ENCODE measurements at regions of chr11 and their contacts with region 1.

Region 1: DNA sequence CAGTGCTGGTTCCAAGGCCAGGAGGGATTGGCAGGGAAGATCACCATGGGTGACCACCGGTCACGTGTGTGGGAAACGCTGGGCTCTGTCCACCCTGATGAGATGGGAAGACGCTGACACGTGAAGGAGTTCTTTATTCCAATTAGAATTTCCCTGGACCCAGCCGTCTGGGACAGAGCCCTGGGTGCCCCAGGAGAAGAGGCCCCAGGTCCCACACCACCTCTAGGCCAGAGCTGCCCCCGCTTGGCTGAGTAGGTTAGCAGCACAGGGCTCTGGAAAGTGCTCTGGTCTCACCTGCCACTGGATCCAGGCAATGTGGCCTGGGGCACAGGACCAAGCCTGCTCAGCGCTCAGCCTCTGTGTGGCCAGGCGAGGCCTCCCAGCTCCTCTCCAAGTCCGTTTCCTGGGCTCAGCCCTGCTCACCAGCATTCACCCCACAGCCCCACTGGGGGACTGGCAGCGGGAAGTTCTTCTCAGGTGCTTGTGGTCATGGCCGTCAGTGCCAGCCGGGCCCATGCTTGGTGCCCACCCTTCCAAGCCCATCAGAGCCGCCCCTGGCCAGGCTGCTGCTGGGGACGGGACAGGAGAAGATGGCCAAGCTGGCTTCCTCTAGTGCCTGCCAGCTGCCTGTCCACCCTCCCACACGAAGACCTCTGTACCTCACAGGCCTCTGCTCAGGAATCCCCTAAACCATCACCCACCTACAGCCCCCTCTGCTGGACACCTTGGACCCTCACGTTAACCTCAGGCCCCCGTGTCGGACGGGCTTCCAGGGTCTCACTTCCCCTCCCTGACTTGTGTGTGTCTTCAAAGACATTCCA is 62.4 kb upstream of the FGF3 start:
- DNase-seq: peak in 1 of 2 experiments; percentile 73
- H3K4me3 ChIP-seq: no peak overlapping the region
- H3K27ac ChIP-seq: no peak overlapping the region
- H3K4me1 ChIP-seq: peaks cover 0 to 8% (median 0%) of the 10 kb centered on the region in 4 experiments; a peak in 4 of 7 replicates
- H3K27me3 ChIP-seq: no peaks in the 10 kb centered on the region; a peak in 2 of 7 replicates
- CTCF ChIP-seq: peak; percentile 61 to 72 (median 69)
- EP300 ChIP-seq: no peak
- POLR2A ChIP-seq: no peak
- RAD21 ChIP-seq: peak; percentile 50 to 69

Region 2: GRCh38 chr11:69683764-69684333 is 197.8 kb before region 1 on chr11:
- CTCF ChIA-PET with region 1: interaction called, 28 read pairs
- POLR2A ChIA-PET with region 1: no interaction called
- DNase-seq: peak in 1 of 2 experiments; percentile 80
- H3K4me3 ChIP-seq: no peak overlapping the region
- H3K27ac ChIP-seq: no peak overlapping the region
- H3K4me1 ChIP-seq: no peaks in the 10 kb centered on the region; a peak in 1 of 7 replicates
- H3K27me3 ChIP-seq: peaks cover 0 to 6% (median 3%) of the 10 kb centered on the region in 4 experiments; a peak in 4 of 7 replicates
- CTCF ChIP-seq: peak; percentile 65 to 74 (median 67)
- EP300 ChIP-seq: no peak
- POLR2A ChIP-seq: no peak
- RAD21 ChIP-seq: peak; percentile 70 to 79

Region 3: DNA sequence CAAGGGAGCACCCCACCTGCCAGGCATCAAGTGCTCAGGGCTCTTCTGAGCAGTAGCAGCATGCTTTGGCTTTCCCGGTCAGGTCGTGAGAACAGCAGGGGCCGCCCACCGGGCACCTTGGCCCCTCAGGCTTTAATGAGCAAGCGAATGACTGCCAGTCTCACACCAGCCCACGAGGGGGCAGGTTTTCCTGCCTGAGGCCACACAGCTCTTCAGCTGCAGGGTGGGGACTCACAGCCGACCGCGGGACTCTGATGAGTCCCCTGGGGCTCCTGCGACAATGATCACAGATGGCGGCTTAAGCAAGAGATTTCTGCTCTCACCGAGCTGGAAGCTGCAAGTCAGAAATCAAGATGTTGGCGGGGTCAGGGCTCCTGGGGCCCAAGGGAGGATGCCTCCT is 163.5 kb before region 1 on chr11:
- CTCF ChIA-PET with region 1: interaction called, 56 read pairs
- POLR2A ChIA-PET with region 1: no interaction called
- DNase-seq: peak; percentile 77 to 84
- H3K4me3 ChIP-seq: peak overlapping the region in 1 of 4 experiments; percentile 14; a peak in 1 of 8 replicates
- H3K27ac ChIP-seq: no peak overlapping the region
- H3K4me1 ChIP-seq: peaks cover 0 to 10% (median 2%) of the 10 kb centered on the region in 4 experiments; a peak in 5 of 7 replicates
- H3K27me3 ChIP-seq: peaks cover 0 to 19% (median 13%) of the 10 kb centered on the region in 4 experiments; a peak in 5 of 7 replicates
- CTCF ChIP-seq: peak; percentile 87 to 92 (median 91)
- EP300 ChIP-seq: no peak
- POLR2A ChIP-seq: no peak
- RAD21 ChIP-seq: peak; percentile 85 to 92

Region 4: DNA sequence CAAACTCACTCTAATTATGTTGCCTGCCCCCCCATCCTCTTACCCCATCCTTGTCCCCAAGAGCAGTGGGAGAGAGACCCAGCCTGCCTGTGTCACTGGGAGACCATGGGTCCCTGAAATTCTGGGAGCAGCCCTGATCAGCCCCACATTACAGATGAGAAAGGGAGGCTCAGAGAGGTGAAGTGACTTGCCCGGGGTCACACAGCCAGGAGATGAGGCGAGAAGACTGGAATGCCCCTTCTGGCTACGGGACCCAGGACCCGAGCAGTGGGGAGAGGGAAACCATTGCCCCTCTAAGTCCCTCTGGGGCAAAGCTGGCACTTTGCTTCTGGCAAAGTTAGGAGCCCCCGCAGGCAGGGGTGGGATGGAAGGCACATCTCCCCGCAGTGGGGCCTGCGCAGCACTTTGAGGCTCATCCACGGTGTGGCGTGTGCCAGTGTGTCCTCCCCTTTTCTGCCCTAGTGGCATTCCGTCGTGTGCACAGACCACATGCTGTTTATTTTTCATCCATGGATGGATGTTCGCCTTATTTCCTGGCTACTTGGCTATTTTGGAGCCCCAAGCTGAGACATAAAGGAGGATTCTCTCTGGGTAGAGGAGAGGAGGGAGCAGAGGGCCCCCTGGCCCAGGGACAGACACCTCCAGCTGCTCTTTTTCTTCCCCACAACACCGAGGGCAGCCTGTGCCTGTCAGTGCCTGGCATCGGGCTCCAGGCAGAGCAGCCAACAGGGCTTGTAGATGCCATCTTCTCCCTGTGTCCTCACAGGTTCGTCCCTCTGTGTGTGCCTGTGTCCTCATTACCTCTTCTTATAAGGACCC is 58.8 kb before region 1 on chr11:
- CTCF ChIA-PET with region 1: interaction called, 13 read pairs
- POLR2A ChIA-PET with region 1: interaction called, 4 read pairs
- DNase-seq: no peak
- H3K4me3 ChIP-seq: no peak overlapping the region
- H3K27ac ChIP-seq: no peak overlapping the region
- H3K4me1 ChIP-seq: peaks cover 0 to 4% (median under 1%) of the 10 kb centered on the region in 4 experiments; a peak in 4 of 7 replicates
- H3K27me3 ChIP-seq: peaks cover 31 to 53% (median 44%) of the 10 kb centered on the region in 4 experiments
- CTCF ChIP-seq: no peak
- EP300 ChIP-seq: no peak
- POLR2A ChIP-seq: no peak
- RAD21 ChIP-seq: no peak

Region 5: DNA sequence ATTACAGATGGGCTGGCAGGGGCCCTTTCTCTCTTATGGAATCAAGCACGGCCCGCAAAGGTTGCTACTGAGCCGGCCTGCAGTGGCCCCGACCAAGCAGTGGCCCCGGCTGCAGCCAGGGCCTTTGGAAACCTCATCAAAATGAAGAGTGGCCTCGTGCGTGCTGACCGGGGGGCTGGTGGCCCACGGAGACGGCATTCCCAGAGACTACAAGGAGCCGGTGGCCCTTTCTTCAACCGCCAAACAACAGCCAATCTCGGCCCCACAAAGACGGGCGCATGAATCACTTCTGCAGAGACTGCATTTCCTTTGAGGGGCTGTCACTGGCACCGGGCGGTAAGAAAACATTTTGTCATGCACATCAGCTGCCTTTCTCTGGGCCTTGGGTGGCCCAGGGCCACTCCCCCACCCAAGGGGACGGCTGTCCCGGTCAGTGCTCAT is 19.3 kb before region 1 on chr11:
- CTCF ChIA-PET with region 1: interaction called, 36 read pairs
- POLR2A ChIA-PET with region 1: interaction called, 3 read pairs
- DNase-seq: no peak
- H3K4me3 ChIP-seq: no peak overlapping the region
- H3K27ac ChIP-seq: no peak overlapping the region
- H3K4me1 ChIP-seq: peaks cover 0 to 3% (median 0%) of the 10 kb centered on the region in 4 experiments; a peak in 2 of 7 replicates
- H3K27me3 ChIP-seq: peaks cover 0 to 2% (median 0%) of the 10 kb centered on the region in 4 experiments; a peak in 1 of 7 replicates
- CTCF ChIP-seq: no peak
- EP300 ChIP-seq: no peak
- POLR2A ChIP-seq: no peak
- RAD21 ChIP-seq: no peak

Region 6: GRCh38 chr11:69909561-69910496 is 28.2 kb after region 1 on chr11:
- CTCF ChIA-PET with region 1: interaction called, 173 read pairs
- POLR2A ChIA-PET with region 1: no interaction called
- DNase-seq: peak in 1 of 2 experiments; percentile 77
- H3K4me3 ChIP-seq: no peak overlapping the region
- H3K27ac ChIP-seq: no peak overlapping the region
- H3K4me1 ChIP-seq: peaks cover 0 to 3% (median 0%) of the 10 kb centered on the region in 4 experiments; a peak in 2 of 7 replicates
- H3K27me3 ChIP-seq: no peaks in the 10 kb centered on the region; a peak in 1 of 7 replicates
- CTCF ChIP-seq: peak; percentile 64 to 82 (median 67); a peak in 3 of 4 replicates
- EP300 ChIP-seq: no peak
- POLR2A ChIP-seq: no peak
- RAD21 ChIP-seq: peak; percentile 40 to 55; a peak in 3 of 4 replicates

Region 7: DNA sequence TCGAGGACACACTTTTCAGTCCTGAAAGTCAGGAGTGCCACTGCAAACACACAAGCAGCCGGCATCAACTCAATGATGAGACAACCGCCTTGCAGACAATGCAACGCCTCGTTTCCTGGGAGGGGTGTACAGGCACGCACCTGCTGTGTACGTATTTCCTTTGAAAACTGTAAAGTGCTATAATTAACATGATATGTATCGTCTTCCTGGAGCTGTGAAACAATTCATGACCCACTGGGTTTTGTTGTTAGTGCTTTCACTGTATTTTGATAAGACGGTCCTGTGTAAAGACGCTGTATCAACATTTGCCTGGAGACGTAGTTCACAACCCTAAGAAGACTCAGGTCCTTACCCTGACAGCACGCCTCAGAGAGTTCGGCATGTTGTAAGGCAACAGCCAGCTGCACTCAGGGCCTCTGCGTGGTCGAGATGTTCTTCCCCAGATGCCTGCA is 90.7 kb after region 1 on chr11:
- CTCF ChIA-PET with region 1: no interaction called
- POLR2A ChIA-PET with region 1: no interaction called
- DNase-seq: no peak
- H3K4me3 ChIP-seq: no peak overlapping the region
- H3K27ac ChIP-seq: no peak overlapping the region
- H3K4me1 ChIP-seq: peaks cover 0 to 2% (median 0%) of the 10 kb centered on the region in 4 experiments; a peak in 2 of 7 replicates
- H3K27me3 ChIP-seq: peaks cover 0 to 3% (median 0%) of the 10 kb centered on the region in 4 experiments; a peak in 1 of 7 replicates
- CTCF ChIP-seq: no peak
- EP300 ChIP-seq: no peak
- POLR2A ChIP-seq: no peak
- RAD21 ChIP-seq: no peak